Activated CD8-positive, alpha-beta T cell treated with anti-CD3 and anti-CD28 coated beads for 36 hours (primary cell): ENCODE measurements at regions of chr3 and their contacts with region 1.

Region 1: GRCh38 chr3:15113463-15113862 is 14.5 kb upstream of the RBSN start:
- DNase-seq: no peak
- ATAC-seq: no peak
- H3K4me3 Mint-ChIP-seq: no peak overlapping the region
- H3K27ac Mint-ChIP-seq: no peak overlapping the region
- H3K4me1 Mint-ChIP-seq: no peaks in the 10 kb centered on the region
- H3K27me3 Mint-ChIP-seq: peaks cover 2% of the 10 kb centered on the region
- CTCF ChIP-seq: no peak

Region 2: GRCh38 chr3:14943042-14943441 is 170.4 kb before region 1 on chr3:
- CTCF ChIA-PET with region 1: no interaction called
- POLR2A ChIA-PET with region 1: no interaction called
- intact Hi-C with region 1: no loop called
- DNase-seq: no peak
- ATAC-seq: no peak
- H3K4me3 Mint-ChIP-seq: no peak overlapping the region
- H3K27ac Mint-ChIP-seq: no peak overlapping the region
- H3K4me1 Mint-ChIP-seq: peaks cover 23% of the 10 kb centered on the region
- H3K27me3 Mint-ChIP-seq: no peaks in the 10 kb centered on the region
- CTCF ChIP-seq: no peak

Region 3: DNA sequence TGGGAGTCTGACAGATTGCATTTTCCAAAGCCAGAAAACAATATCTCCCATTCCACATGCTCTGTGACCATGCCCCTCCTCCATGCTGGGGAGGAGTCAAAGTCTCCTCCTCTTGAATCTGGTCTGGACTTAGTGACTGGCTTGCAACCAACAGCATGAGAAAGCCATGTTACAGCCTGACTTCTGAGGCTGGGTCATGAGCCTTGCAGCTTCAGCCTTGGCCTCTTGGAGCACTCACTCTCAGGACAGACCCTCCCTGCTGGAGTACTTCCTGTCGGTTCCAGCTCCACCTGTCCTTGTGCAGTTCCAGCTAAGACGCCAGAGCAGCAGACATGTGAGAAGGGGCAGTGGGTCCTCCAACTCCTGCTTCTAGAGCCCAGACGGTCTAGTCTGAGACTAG is 35.2 kb after region 1 on chr3:
- CTCF ChIA-PET with region 1: interaction called, 11 read pairs
- POLR2A ChIA-PET with region 1: no interaction called
- intact Hi-C with region 1: no loop called
- DNase-seq: peak; percentile 4
- ATAC-seq: peak; percentile 39
- H3K4me3 Mint-ChIP-seq: no peak overlapping the region
- H3K27ac Mint-ChIP-seq: no peak overlapping the region
- H3K4me1 Mint-ChIP-seq: no peaks in the 10 kb centered on the region
- H3K27me3 Mint-ChIP-seq: peaks cover 15% of the 10 kb centered on the region
- CTCF ChIP-seq: no peak

Region 4: DNA sequence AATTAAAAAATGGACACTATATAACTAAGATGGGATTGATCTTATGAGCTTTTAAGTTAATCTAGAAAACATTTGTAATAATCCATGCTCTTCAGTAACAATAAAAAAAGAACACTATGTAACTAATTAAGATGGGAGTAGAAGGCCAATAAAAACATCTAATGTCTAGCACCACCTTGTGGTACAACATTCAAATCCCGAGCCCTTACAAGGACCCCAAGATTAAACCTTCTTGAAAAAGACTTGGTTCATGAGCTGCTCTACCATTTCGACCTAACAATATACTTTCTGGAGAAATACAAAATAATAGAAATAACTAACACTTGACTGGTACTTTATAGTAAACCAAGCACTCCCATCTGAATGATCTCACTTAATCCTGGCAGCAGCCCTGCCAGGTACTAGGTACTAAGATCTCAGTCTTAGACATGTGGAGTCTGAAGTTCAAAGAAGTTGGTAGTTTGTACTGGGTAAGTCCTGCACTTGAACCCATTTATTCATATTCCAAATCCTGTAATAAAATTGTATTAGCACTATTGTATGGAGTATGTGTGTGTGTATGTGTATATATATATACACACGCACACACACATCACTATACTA is 292.1 kb after region 1 on chr3:
- CTCF ChIA-PET with region 1: interaction called, 9 read pairs
- POLR2A ChIA-PET with region 1: no interaction called
- intact Hi-C with region 1: loop called (anchors 10 kb)
- DNase-seq: peak; percentile 35
- ATAC-seq: peak; percentile 67
- H3K4me3 Mint-ChIP-seq: no peak overlapping the region
- H3K27ac Mint-ChIP-seq: no peak overlapping the region
- H3K4me1 Mint-ChIP-seq: no peaks in the 10 kb centered on the region
- H3K27me3 Mint-ChIP-seq: no peaks in the 10 kb centered on the region
- CTCF ChIP-seq: peak; percentile 63